ENCODE measurements at regions of chr2 and their contacts with region 1.

Region 1: GRCh38 chr2:227862227-227862740 is 9.1 kb upstream of the DAW1 start:
- DNase-seq: no peak
- H3K4me3 ChIP-seq: no peak overlapping the region
- H3K27ac ChIP-seq: peak overlapping the region in 2 of 4 donors; percentile 48 to 58
- H3K4me1 ChIP-seq: peaks cover 0 to 43% (median 12%) of the 10 kb centered on the region in 3 donors
- H3K27me3 ChIP-seq: no peaks in the 10 kb centered on the region
- CTCF ChIP-seq: peak in 5 of 6 experiments; percentile 52 to 87 (median 73)
- POLR2A ChIP-seq: no peak

Region 2: GRCh38 chr2:227661019-227661649 is 201.2 kb before region 1 on chr2:
- intact Hi-C with region 1: loop called (anchors 10 kb)
- DNase-seq: no peak
- H3K4me3 ChIP-seq: no peak overlapping the region
- H3K27ac ChIP-seq: no peak overlapping the region
- H3K4me1 ChIP-seq: no peaks in the 10 kb centered on the region
- H3K27me3 ChIP-seq: no peaks in the 10 kb centered on the region
- CTCF ChIP-seq: no peak
- POLR2A ChIP-seq: no peak

Region 3: GRCh38 chr2:227921648-227922047 is 59.4 kb after region 1 on chr2:
- intact Hi-C with region 1: no loop called
- DNase-seq: no peak
- H3K4me3 ChIP-seq: no peak overlapping the region
- H3K27ac ChIP-seq: no peak overlapping the region
- H3K4me1 ChIP-seq: no peaks in the 10 kb centered on the region
- H3K27me3 ChIP-seq: no peaks in the 10 kb centered on the region
- CTCF ChIP-seq: no peak
- POLR2A ChIP-seq: no peak